Activated CD8-positive, alpha-beta T cell treated with anti-CD3 and anti-CD28 coated beads for 36 hours (primary cell): ENCODE measurements at regions of chr22 and their contacts with region 1.

Region 1: DNA sequence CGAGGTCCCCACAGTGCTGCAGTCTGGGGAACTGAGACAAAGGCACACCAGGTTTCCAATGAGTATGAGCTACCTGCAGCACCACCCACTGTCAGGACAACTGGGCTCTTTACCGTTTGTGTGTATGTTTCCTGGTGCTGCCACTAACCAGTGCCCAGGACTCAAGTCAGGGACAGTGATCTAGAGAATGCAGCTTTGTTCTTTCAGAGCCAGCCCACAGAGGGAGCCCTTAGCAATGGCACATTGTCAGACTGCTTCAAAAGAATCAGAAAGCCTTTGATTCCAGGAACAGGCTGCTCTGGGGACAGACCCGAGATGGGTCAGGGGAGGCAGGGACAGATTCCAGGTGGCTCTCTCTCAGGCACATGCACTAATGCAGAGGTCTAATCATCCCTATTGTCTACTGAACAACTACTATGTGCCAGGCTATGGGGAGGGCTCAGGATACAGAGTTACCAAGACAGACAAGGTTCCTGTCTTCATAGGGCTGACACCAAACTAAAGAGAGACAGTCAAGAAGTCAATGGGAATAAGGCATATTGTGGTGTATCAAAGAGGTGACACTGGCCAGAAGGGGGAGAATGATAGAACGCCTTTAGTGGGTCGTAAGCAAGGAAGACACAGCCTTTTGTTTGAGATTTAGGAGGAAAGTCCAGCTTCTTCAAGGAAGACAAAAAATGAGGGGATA is 103.7 kb downstream of the VPREB1 start:
- DNase-seq: no peak
- ATAC-seq: peak; percentile 37
- H3K4me3 Mint-ChIP-seq: no peak overlapping the region
- H3K27ac Mint-ChIP-seq: no peak overlapping the region
- H3K4me1 Mint-ChIP-seq: no peaks in the 10 kb centered on the region
- H3K27me3 Mint-ChIP-seq: peaks cover 10% of the 10 kb centered on the region
- CTCF ChIP-seq: no peak

Region 2: GRCh38 chr22:22374163-22374562 is 25.9 kb after region 1 on chr22:
- CTCF ChIA-PET with region 1: interaction called, 3 read pairs
- POLR2A ChIA-PET with region 1: no interaction called
- intact Hi-C with region 1: loop called (anchors 1 kb)
- DNase-seq: no peak
- ATAC-seq: no peak
- H3K4me3 Mint-ChIP-seq: no peak overlapping the region
- H3K27ac Mint-ChIP-seq: no peak overlapping the region
- H3K4me1 Mint-ChIP-seq: no peaks in the 10 kb centered on the region
- H3K27me3 Mint-ChIP-seq: peaks cover 26% of the 10 kb centered on the region
- CTCF ChIP-seq: no peak

Region 3: DNA sequence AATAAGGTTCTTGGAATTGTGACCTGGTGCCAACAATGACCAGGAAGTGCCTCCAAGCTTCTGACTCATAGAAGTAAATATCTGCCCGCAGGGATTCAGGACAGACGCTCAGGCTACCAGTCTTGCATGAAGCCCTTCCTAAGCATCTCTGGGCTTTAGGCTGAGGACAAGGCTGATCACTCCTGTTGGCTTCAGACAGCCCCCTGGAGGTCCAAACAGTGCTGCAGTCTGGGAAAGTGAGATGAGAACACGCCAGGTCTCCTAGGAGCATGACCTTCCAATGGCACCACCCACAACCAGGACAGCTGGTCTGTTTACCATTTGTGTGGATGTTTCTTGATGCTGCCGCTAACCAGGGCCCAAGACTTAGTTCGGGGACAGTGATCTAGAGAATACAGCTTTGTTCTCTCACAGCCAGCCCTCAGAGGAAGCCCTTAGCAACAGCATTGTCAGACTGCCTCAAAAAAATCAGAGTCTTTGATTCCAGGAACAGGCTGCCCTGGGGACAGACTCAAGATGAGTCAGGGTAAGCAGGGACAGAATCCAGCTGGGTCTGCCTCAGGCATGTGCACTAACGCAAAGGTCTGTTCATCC is 49.1 kb after region 1 on chr22:
- CTCF ChIA-PET with region 1: interaction called, 3 read pairs
- POLR2A ChIA-PET with region 1: interaction called, 3 read pairs
- intact Hi-C with region 1: loop called (anchors 1 kb)
- DNase-seq: no peak
- ATAC-seq: no peak
- H3K4me3 Mint-ChIP-seq: no peak overlapping the region
- H3K27ac Mint-ChIP-seq: no peak overlapping the region
- H3K4me1 Mint-ChIP-seq: no peaks in the 10 kb centered on the region
- H3K27me3 Mint-ChIP-seq: peaks cover 3% of the 10 kb centered on the region
- CTCF ChIP-seq: no peak